ENCODE measurements at regions of chr2 and their contacts with region 1.

Region 1: GRCh38 chr2:207046724-207047123 is 107.4 kb downstream of the CPO start:
- DNase-seq: peak in 11 of 14 experiments; percentile 3 to 70 (median 12)
- ATAC-seq: peak; percentile 86
- H3K4me3 ChIP-seq: no peak overlapping the region
- H3K4me3 Mint-ChIP-seq: no peak overlapping the region
- H3K27ac ChIP-seq: no peak overlapping the region
- H3K27ac Mint-ChIP-seq: no peak overlapping the region
- H3K4me1 ChIP-seq: peaks cover 6% of the 10 kb centered on the region
- H3K4me1 Mint-ChIP-seq: peaks cover 10% of the 10 kb centered on the region
- H3K27me3 ChIP-seq: no peaks in the 10 kb centered on the region
- H3K27me3 Mint-ChIP-seq: no peaks in the 10 kb centered on the region
- CTCF ChIP-seq: peak; percentile 63

Region 2: GRCh38 chr2:207258263-207258991 is 211.7 kb after region 1 on chr2:
- CTCF ChIA-PET with region 1: no interaction called
- POLR2A ChIA-PET with region 1: no interaction called
- intact Hi-C with region 1: loop called in 1 of 2 experiments (anchors 2 kb)
- DNase-seq: no peak
- ATAC-seq: no peak
- H3K4me3 ChIP-seq: no peak overlapping the region
- H3K4me3 Mint-ChIP-seq: no peak overlapping the region
- H3K27ac ChIP-seq: no peak overlapping the region
- H3K27ac Mint-ChIP-seq: no peak overlapping the region
- H3K4me1 ChIP-seq: no peaks in the 10 kb centered on the region
- H3K4me1 Mint-ChIP-seq: no peaks in the 10 kb centered on the region
- H3K27me3 ChIP-seq: no peaks in the 10 kb centered on the region
- H3K27me3 Mint-ChIP-seq: no peaks in the 10 kb centered on the region
- CTCF ChIP-seq: no peak

Region 3: GRCh38 chr2:207352978-207353671 is 306.4 kb after region 1 on chr2:
- CTCF ChIA-PET with region 1: no interaction called
- POLR2A ChIA-PET with region 1: no interaction called
- intact Hi-C with region 1: loop called in 1 of 2 experiments (anchors 5 kb)
- DNase-seq: peak in 8 of 14 experiments; percentile 0 to 47 (median 20)
- ATAC-seq: peak; percentile 49
- H3K4me3 ChIP-seq: no peak overlapping the region
- H3K4me3 Mint-ChIP-seq: no peak overlapping the region
- H3K27ac ChIP-seq: no peak overlapping the region
- H3K27ac Mint-ChIP-seq: no peak overlapping the region
- H3K4me1 ChIP-seq: no peaks in the 10 kb centered on the region
- H3K4me1 Mint-ChIP-seq: peaks cover 10% of the 10 kb centered on the region
- H3K27me3 ChIP-seq: no peaks in the 10 kb centered on the region
- H3K27me3 Mint-ChIP-seq: no peaks in the 10 kb centered on the region
- CTCF ChIP-seq: no peak

Measured in CD4-positive, alpha-beta T cell (primary cell).